ENCODE measurements at regions of chr9 and their contacts with region 1.

Region 1: DNA sequence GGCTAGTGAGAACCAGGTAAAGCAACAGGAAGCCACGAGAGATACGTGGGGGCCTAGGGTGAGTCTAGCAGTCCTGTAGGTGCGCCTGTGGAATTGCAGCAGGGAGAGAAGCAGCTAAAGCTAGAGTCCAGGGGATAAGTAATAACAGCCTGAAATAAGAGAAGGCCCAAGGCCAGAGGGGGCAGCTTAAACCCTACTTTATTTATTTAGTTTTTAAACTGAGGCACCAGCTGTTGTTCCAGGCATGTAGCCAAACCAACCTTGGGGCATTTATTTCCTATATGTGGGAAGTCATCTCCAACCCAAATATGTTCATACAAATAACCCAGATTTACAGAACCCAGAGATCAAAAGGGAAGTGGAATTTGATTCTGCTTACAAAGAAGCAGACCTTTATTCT is 93.5 kb downstream of the GLDC start:
- DNase-seq: no peak
- H3K4me3 Mint-ChIP-seq: no peak overlapping the region
- H3K27ac Mint-ChIP-seq: no peak overlapping the region
- H3K4me1 Mint-ChIP-seq: no peaks in the 10 kb centered on the region
- H3K27me3 Mint-ChIP-seq: no peaks in the 10 kb centered on the region

Region 2: DNA sequence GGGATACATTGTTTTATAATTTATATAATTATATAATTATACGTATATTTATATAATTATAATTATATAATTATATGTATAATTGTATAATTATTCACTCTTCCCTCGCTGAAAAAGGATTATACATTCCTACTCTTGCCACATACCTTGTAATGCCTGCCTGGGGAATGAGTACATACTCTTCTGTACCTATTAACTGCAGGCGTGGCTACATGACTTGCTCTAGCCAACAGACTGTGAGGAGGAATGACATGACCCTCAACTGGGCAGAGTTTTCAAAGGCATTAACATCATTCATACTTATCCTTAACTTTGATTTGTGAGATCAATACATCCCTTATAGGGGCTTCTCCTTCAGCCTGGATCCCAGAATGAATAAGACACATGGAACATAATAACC is 738.2 kb before region 1 on chr9:
- intact Hi-C with region 1: no loop called
- DNase-seq: no peak
- H3K4me3 Mint-ChIP-seq: no peak overlapping the region
- H3K27ac Mint-ChIP-seq: no peak overlapping the region
- H3K4me1 Mint-ChIP-seq: peaks cover 13% of the 10 kb centered on the region
- H3K27me3 Mint-ChIP-seq: no peaks in the 10 kb centered on the region

Region 3: GRCh38 chr9:6428940-6429889 is 122.8 kb before region 1 on chr9:
- intact Hi-C with region 1: no loop called
- DNase-seq: peak; percentile 40
- H3K4me3 Mint-ChIP-seq: peak overlapping the region; percentile 46
- H3K27ac Mint-ChIP-seq: peak overlapping the region; percentile 76
- H3K4me1 Mint-ChIP-seq: peaks cover 86% of the 10 kb centered on the region
- H3K27me3 Mint-ChIP-seq: no peaks in the 10 kb centered on the region

Region 4: DNA sequence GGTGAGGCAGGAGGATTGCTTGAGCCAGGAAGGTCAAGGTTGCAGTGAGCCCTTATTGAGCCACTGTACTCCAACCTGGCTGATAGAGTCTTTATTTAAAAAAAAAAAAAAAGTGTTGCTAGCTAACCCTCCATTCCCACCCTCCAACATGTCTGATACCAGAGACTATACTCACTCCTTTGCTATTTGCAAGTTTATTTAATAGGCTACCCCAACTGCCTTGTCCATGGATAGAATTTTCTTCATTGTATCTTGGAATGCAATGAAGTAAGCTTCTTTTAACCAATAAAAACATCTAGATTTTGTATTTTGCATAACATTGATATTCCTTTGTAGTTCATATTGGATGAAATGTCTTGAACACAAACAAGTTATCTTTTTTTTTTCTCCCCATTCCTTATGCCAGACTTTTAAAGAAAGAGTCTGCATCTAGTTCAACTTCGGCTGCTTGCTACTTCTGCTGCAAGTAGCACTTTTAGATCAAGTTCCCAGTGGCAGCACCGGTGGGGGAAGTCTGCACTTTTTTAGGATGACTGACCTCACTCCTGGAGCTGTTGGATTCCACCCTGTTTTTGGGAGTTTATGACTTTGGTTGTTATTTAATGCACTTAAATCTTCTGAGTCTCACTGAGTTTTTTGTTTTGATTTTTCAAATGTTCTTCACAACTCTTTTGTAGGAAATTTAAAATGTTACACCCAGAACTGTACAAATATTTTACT is 26.5 kb before region 1 on chr9:
- intact Hi-C with region 1: loop called (anchors 1 kb)
- DNase-seq: no peak
- H3K4me3 Mint-ChIP-seq: no peak overlapping the region
- H3K27ac Mint-ChIP-seq: no peak overlapping the region
- H3K4me1 Mint-ChIP-seq: no peaks in the 10 kb centered on the region
- H3K27me3 Mint-ChIP-seq: no peaks in the 10 kb centered on the region